ENCODE measurements at regions of chr14 and their contacts with region 1.

Region 1: GRCh38 chr14:62126879-62127478 is 364.8 kb downstream of the SNAPC1 start:
- DNase-seq: no peak
- ATAC-seq: peak; percentile 80
- H3K4me3 Mint-ChIP-seq: no peak overlapping the region
- H3K27ac Mint-ChIP-seq: no peak overlapping the region
- H3K4me1 Mint-ChIP-seq: peaks cover 15% of the 10 kb centered on the region
- H3K27me3 Mint-ChIP-seq: no peaks in the 10 kb centered on the region
- CTCF ChIP-seq: peak; percentile 23; the same call in 1 of the 2 replicates

Region 2: GRCh38 chr14:61837336-61838229 is 289.4 kb before region 1 on chr14:
- CTCF ChIA-PET with region 1: interaction called, 20 read pairs
- POLR2A ChIA-PET with region 1: no interaction called
- DNase-seq: peak; percentile 78
- ATAC-seq: peak; percentile 92
- H3K4me3 Mint-ChIP-seq: no peak overlapping the region
- H3K27ac Mint-ChIP-seq: no peak overlapping the region
- H3K4me1 Mint-ChIP-seq: peaks cover 17% of the 10 kb centered on the region
- H3K27me3 Mint-ChIP-seq: no peaks in the 10 kb centered on the region
- CTCF ChIP-seq: peak; percentile 81

Region 3: DNA sequence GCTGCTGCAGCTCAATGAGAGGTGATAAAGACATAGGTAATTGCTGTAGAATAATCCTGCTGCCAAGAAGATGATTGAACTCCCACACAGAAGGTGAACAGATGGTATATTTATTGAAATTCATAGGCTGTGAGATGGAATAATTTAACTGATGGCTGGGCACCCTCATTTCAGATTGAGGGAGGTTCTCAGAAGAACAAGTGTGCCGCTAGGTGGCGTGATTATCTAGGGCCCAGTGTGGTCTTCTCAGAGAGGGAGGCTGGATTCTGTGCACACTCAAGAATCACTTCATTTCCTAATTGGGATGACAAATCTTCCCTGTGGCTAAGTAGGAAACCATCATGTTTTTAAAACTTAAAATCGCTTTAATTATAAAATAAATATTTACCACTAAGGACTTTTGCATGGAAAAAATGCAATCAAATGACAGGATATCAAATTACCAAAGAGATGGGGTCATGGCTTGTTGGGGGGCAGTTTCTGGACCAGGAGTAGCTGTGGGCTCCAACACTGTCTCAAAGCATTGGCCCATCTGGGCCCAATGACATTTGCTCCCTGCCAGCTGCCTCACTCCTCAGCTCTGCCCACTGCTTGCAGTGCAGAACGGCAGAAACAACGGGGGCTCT is 232.4 kb before region 1 on chr14:
- CTCF ChIA-PET with region 1: interaction called, 20 read pairs
- POLR2A ChIA-PET with region 1: no interaction called
- DNase-seq: peak; percentile 71
- ATAC-seq: peak; percentile 60
- H3K4me3 Mint-ChIP-seq: no peak overlapping the region
- H3K27ac Mint-ChIP-seq: no peak overlapping the region
- H3K4me1 Mint-ChIP-seq: peaks cover 37% of the 10 kb centered on the region
- H3K27me3 Mint-ChIP-seq: no peaks in the 10 kb centered on the region; the same call in 1 of the 2 replicates
- CTCF ChIP-seq: peak; percentile 43; the same call in 1 of the 2 replicates

Region 4: GRCh38 chr14:61904181-61904580 is 222.8 kb before region 1 on chr14:
- CTCF ChIA-PET with region 1: interaction called, 11 read pairs
- POLR2A ChIA-PET with region 1: no interaction called
- DNase-seq: no peak
- ATAC-seq: peak; percentile 69
- H3K4me3 Mint-ChIP-seq: no peak overlapping the region
- H3K27ac Mint-ChIP-seq: no peak overlapping the region
- H3K4me1 Mint-ChIP-seq: peaks cover 8% of the 10 kb centered on the region
- H3K27me3 Mint-ChIP-seq: no peaks in the 10 kb centered on the region
- CTCF ChIP-seq: no peak

Region 5: GRCh38 chr14:61925043-61925442 is 201.9 kb before region 1 on chr14:
- CTCF ChIA-PET with region 1: interaction called, 118 read pairs
- POLR2A ChIA-PET with region 1: no interaction called
- DNase-seq: no peak
- ATAC-seq: peak; percentile 79
- H3K4me3 Mint-ChIP-seq: no peak overlapping the region
- H3K27ac Mint-ChIP-seq: no peak overlapping the region
- H3K4me1 Mint-ChIP-seq: peaks cover 45% of the 10 kb centered on the region
- H3K27me3 Mint-ChIP-seq: peaks cover 4% of the 10 kb centered on the region
- CTCF ChIP-seq: no peak

Region 6: GRCh38 chr14:61940666-61941423 is 186.1 kb before region 1 on chr14:
- CTCF ChIA-PET with region 1: interaction called, 13 read pairs
- POLR2A ChIA-PET with region 1: no interaction called
- DNase-seq: peak; percentile 19
- ATAC-seq: peak; percentile 88
- H3K4me3 Mint-ChIP-seq: no peak overlapping the region
- H3K27ac Mint-ChIP-seq: 0 out of 2 replicates have a peak overlapping the region, but pooled peaks have one; percentile 1
- H3K4me1 Mint-ChIP-seq: peaks cover 35% of the 10 kb centered on the region
- H3K27me3 Mint-ChIP-seq: no peaks in the 10 kb centered on the region; the same call in 1 of the 2 replicates
- CTCF ChIP-seq: no peak

Region 7: GRCh38 chr14:62144863-62145262 is 17.9 kb after region 1 on chr14:
- CTCF ChIA-PET with region 1: no interaction called
- POLR2A ChIA-PET with region 1: no interaction called
- DNase-seq: no peak
- ATAC-seq: no peak
- H3K4me3 Mint-ChIP-seq: no peak overlapping the region
- H3K27ac Mint-ChIP-seq: no peak overlapping the region
- H3K4me1 Mint-ChIP-seq: peaks cover 5% of the 10 kb centered on the region
- H3K27me3 Mint-ChIP-seq: no peaks in the 10 kb centered on the region
- CTCF ChIP-seq: no peak

Measured in WTC11 (cell line).